Caco-2 (cell line): ENCODE measurements at regions of chr2 and their contacts with region 1.

Region 1: DNA sequence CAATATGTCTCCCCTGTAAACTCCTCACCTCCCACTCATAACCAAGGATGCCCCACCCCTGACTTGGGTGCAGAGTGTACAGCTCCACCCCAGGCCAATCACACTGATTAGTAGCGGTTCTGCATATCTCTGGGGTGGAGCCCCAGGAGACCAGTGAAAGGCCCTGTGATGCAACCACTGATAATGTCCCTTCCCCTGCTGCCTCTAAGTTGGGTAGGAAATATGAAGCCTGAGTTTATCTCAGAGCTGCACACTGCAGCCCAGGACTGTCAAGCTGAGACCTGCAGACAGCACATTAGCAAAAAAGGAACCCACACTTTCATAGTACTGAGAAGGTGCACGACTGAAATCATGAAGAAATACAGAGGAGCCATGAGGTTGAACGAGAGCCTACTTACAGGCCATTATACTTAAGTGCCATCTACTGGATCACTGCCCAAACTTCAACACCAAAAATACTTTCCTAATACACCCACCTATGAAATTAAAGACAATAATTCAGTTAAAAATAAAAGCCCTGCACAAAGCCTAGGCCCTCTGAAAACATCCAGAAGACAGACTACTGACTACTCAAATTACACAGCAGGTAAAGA is 455.4 kb upstream of the LRRTM4 start:
- DNase-seq: peak in 1 of 2 experiments; percentile 12
- H3K4me3 ChIP-seq: no peak overlapping the region
- H3K4me3 Mint-ChIP-seq: no peak overlapping the region
- H3K27ac Mint-ChIP-seq: no peak overlapping the region
- H3K4me1 ChIP-seq: no peaks in the 10 kb centered on the region
- H3K4me1 Mint-ChIP-seq: no peaks in the 10 kb centered on the region
- H3K27me3 ChIP-seq: no peaks in the 10 kb centered on the region
- H3K27me3 Mint-ChIP-seq: no peaks in the 10 kb centered on the region
- CTCF ChIP-seq: peak; percentile 22 to 28

Region 2: GRCh38 chr2:76953733-76954347 is 1023.7 kb before region 1 on chr2:
- CTCF ChIA-PET with region 1: no interaction called
- POLR2A ChIA-PET with region 1: no interaction called
- intact Hi-C with region 1: loop called (anchors 2 kb)
- DNase-seq: peak; percentile 38 to 65
- H3K4me3 ChIP-seq: no peak overlapping the region
- H3K4me3 Mint-ChIP-seq: no peak overlapping the region
- H3K27ac Mint-ChIP-seq: no peak overlapping the region
- H3K4me1 ChIP-seq: no peaks in the 10 kb centered on the region
- H3K4me1 Mint-ChIP-seq: no peaks in the 10 kb centered on the region
- H3K27me3 ChIP-seq: no peaks in the 10 kb centered on the region
- H3K27me3 Mint-ChIP-seq: no peaks in the 10 kb centered on the region
- CTCF ChIP-seq: peak; percentile 71 to 83

Region 3: GRCh38 chr2:77363277-77363676 is 614.3 kb before region 1 on chr2:
- CTCF ChIA-PET with region 1: no interaction called
- POLR2A ChIA-PET with region 1: no interaction called
- intact Hi-C with region 1: loop called (anchors 10 kb)
- DNase-seq: no peak
- H3K4me3 ChIP-seq: no peak overlapping the region
- H3K4me3 Mint-ChIP-seq: no peak overlapping the region
- H3K27ac Mint-ChIP-seq: no peak overlapping the region
- H3K4me1 ChIP-seq: no peaks in the 10 kb centered on the region
- H3K4me1 Mint-ChIP-seq: no peaks in the 10 kb centered on the region
- H3K27me3 ChIP-seq: no peaks in the 10 kb centered on the region
- H3K27me3 Mint-ChIP-seq: peaks cover 11% of the 10 kb centered on the region
- CTCF ChIP-seq: no peak

Region 4: DNA sequence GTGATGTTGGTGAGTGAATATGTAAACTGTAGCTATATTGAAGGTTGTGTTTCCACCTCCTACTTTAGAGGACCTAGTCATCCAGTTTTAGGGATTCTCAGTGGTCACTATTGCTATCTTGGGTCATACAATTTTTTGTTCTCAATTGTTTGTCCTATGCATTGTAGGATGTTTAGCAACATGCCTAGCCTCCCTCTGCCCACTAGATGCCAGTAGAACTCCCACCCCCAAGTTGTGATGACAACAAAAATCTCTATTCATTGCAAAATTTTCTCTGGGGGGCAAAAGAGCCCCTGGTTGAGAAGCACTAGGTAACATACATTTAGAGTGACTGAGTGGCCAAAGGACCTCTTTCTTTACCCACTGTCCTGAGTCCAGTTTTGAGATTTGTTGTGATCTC is 542.7 kb before region 1 on chr2:
- CTCF ChIA-PET with region 1: no interaction called
- POLR2A ChIA-PET with region 1: no interaction called
- intact Hi-C with region 1: loop called (anchors 5 kb)
- DNase-seq: no peak
- H3K4me3 ChIP-seq: no peak overlapping the region
- H3K4me3 Mint-ChIP-seq: no peak overlapping the region
- H3K27ac Mint-ChIP-seq: no peak overlapping the region
- H3K4me1 ChIP-seq: no peaks in the 10 kb centered on the region
- H3K4me1 Mint-ChIP-seq: no peaks in the 10 kb centered on the region
- H3K27me3 ChIP-seq: no peaks in the 10 kb centered on the region
- H3K27me3 Mint-ChIP-seq: no peaks in the 10 kb centered on the region
- CTCF ChIP-seq: peak in 1 of 2 experiments; percentile 23

Region 5: DNA sequence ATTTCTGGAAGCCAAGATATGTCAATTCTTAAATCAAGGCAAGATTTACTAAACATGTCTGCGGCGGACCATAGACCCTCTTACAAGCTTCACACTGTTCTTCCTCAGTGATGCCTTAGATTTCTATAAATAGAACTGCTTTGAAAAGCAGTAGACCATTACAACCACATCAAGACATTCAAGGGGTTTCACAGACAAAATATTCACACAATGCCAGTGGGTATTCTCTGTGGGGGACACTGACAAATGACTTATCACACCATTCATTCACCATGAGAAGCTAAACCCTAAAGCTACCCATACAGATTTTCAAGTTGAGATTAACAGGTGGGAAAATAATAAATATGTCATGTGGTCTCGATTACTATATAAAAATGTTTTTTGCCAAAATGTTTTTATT is 439.5 kb before region 1 on chr2:
- CTCF ChIA-PET with region 1: no interaction called
- POLR2A ChIA-PET with region 1: no interaction called
- intact Hi-C with region 1: loop called (anchors 5 kb)
- DNase-seq: no peak
- H3K4me3 ChIP-seq: no peak overlapping the region
- H3K4me3 Mint-ChIP-seq: no peak overlapping the region
- H3K27ac Mint-ChIP-seq: no peak overlapping the region
- H3K4me1 ChIP-seq: no peaks in the 10 kb centered on the region
- H3K4me1 Mint-ChIP-seq: no peaks in the 10 kb centered on the region
- H3K27me3 ChIP-seq: no peaks in the 10 kb centered on the region
- H3K27me3 Mint-ChIP-seq: no peaks in the 10 kb centered on the region
- CTCF ChIP-seq: no peak

Region 6: GRCh38 chr2:77737236-77737635 is 240.3 kb before region 1 on chr2:
- CTCF ChIA-PET with region 1: no interaction called
- POLR2A ChIA-PET with region 1: no interaction called
- intact Hi-C with region 1: loop called (anchors 5 kb)
- DNase-seq: no peak
- H3K4me3 ChIP-seq: no peak overlapping the region
- H3K4me3 Mint-ChIP-seq: no peak overlapping the region
- H3K27ac Mint-ChIP-seq: no peak overlapping the region
- H3K4me1 ChIP-seq: no peaks in the 10 kb centered on the region
- H3K4me1 Mint-ChIP-seq: no peaks in the 10 kb centered on the region
- H3K27me3 ChIP-seq: no peaks in the 10 kb centered on the region
- H3K27me3 Mint-ChIP-seq: no peaks in the 10 kb centered on the region
- CTCF ChIP-seq: no peak

Region 7: DNA sequence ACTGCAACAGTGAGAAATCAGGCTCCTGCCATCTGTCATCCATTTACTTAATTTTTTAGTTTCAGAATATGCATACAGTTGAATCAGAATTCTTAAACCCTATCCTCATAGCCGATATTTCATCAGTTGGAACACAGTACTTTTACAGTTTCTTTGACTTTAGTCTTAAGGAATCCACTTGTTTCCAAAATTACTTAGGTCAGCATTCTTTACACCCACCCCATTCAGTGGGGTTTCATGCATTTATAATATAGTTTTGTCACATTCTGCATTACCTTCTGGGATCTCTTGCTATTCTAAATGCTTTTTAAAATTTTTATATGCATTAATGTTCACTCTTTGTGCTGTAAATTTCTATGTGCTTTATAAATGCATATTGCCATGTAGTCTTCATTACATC is 55.0 kb before region 1 on chr2:
- CTCF ChIA-PET with region 1: no interaction called
- POLR2A ChIA-PET with region 1: no interaction called
- intact Hi-C with region 1: no loop called
- DNase-seq: no peak
- H3K4me3 ChIP-seq: no peak overlapping the region
- H3K4me3 Mint-ChIP-seq: no peak overlapping the region
- H3K27ac Mint-ChIP-seq: no peak overlapping the region
- H3K4me1 ChIP-seq: no peaks in the 10 kb centered on the region
- H3K4me1 Mint-ChIP-seq: peaks cover 9% of the 10 kb centered on the region
- H3K27me3 ChIP-seq: no peaks in the 10 kb centered on the region
- H3K27me3 Mint-ChIP-seq: no peaks in the 10 kb centered on the region
- CTCF ChIP-seq: no peak

Region 8: GRCh38 chr2:77999376-77999775 is 21.8 kb after region 1 on chr2:
- CTCF ChIA-PET with region 1: no interaction called
- POLR2A ChIA-PET with region 1: no interaction called
- intact Hi-C with region 1: no loop called
- DNase-seq: no peak
- H3K4me3 ChIP-seq: no peak overlapping the region
- H3K4me3 Mint-ChIP-seq: no peak overlapping the region
- H3K27ac Mint-ChIP-seq: no peak overlapping the region
- H3K4me1 ChIP-seq: no peaks in the 10 kb centered on the region
- H3K4me1 Mint-ChIP-seq: no peaks in the 10 kb centered on the region
- H3K27me3 ChIP-seq: no peaks in the 10 kb centered on the region
- H3K27me3 Mint-ChIP-seq: no peaks in the 10 kb centered on the region
- CTCF ChIP-seq: no peak

Region 9: GRCh38 chr2:78093436-78093835 is 115.9 kb after region 1 on chr2:
- CTCF ChIA-PET with region 1: no interaction called
- POLR2A ChIA-PET with region 1: no interaction called
- intact Hi-C with region 1: no loop called
- DNase-seq: no peak
- H3K4me3 ChIP-seq: no peak overlapping the region
- H3K4me3 Mint-ChIP-seq: no peak overlapping the region
- H3K27ac Mint-ChIP-seq: no peak overlapping the region
- H3K4me1 ChIP-seq: no peaks in the 10 kb centered on the region
- H3K4me1 Mint-ChIP-seq: no peaks in the 10 kb centered on the region
- H3K27me3 ChIP-seq: no peaks in the 10 kb centered on the region
- H3K27me3 Mint-ChIP-seq: no peaks in the 10 kb centered on the region
- CTCF ChIP-seq: no peak

Region 10: GRCh38 chr2:78132391-78133370 is 155.1 kb after region 1 on chr2:
- CTCF ChIA-PET with region 1: no interaction called
- POLR2A ChIA-PET with region 1: no interaction called
- intact Hi-C with region 1: no loop called
- DNase-seq: no peak
- H3K4me3 ChIP-seq: no peak overlapping the region
- H3K4me3 Mint-ChIP-seq: no peak overlapping the region
- H3K27ac Mint-ChIP-seq: no peak overlapping the region
- H3K4me1 ChIP-seq: no peaks in the 10 kb centered on the region
- H3K4me1 Mint-ChIP-seq: no peaks in the 10 kb centered on the region
- H3K27me3 ChIP-seq: no peaks in the 10 kb centered on the region
- H3K27me3 Mint-ChIP-seq: no peaks in the 10 kb centered on the region
- CTCF ChIP-seq: no peak